IMR-90 (cell line): ENCODE measurements at regions of chrX and their contacts with region 1.

Region 1: DNA sequence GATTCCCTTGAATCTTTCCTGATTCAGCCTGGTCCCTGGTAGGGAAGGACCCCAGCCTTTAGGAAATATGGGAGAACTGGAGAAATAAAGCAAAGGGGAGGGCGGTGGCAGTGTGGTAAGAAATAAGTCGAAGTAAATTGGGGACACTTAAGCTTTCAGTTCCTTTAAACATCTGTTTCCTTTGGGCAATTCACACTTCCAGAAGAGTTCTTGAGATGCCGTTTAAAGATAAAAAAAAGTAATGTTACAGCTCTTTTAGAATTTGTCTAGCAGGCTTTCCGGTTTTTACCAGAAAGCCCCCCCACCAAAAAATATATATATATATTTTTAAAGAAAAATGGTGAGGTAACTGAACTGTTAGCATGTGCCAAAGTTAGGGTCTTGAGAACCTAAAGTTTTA is 46.6 kb downstream of the TSPAN7 start:
- DNase-seq: no peak
- ATAC-seq: no peak
- H3K4me3 ChIP-seq: no peak overlapping the region
- H3K27ac ChIP-seq: no peak overlapping the region
- H3K4me1 ChIP-seq: no peaks in the 10 kb centered on the region
- H3K27me3 ChIP-seq: no peaks in the 10 kb centered on the region
- CTCF ChIP-seq: no peak
- POLR2A ChIP-seq: no peak
- RAD21 ChIP-seq: no peak

Region 2: GRCh38 chrX:38365954-38366353 is 242.0 kb before region 1 on chrX:
- CTCF ChIA-PET with region 1: no interaction called
- POLR2A ChIA-PET with region 1: no interaction called
- dilution Hi-C with region 1: no loop called
- in situ Hi-C with region 1: no loop called
- intact Hi-C with region 1: no loop called
- DNase-seq: no peak
- ATAC-seq: no peak
- H3K4me3 ChIP-seq: no peak overlapping the region
- H3K27ac ChIP-seq: no peak overlapping the region
- H3K4me1 ChIP-seq: no peaks in the 10 kb centered on the region
- H3K27me3 ChIP-seq: peaks cover 2% of the 10 kb centered on the region; the same call in 1 of the 2 replicates
- CTCF ChIP-seq: no peak
- POLR2A ChIP-seq: no peak
- RAD21 ChIP-seq: no peak

Region 3: GRCh38 chrX:38646129-38646528 is 38.2 kb after region 1 on chrX:
- CTCF ChIA-PET with region 1: no interaction called
- POLR2A ChIA-PET with region 1: no interaction called
- dilution Hi-C with region 1: no loop called
- in situ Hi-C with region 1: no loop called
- intact Hi-C with region 1: loop called (anchors 1 kb)
- DNase-seq: no peak
- ATAC-seq: no peak
- H3K4me3 ChIP-seq: no peak overlapping the region
- H3K27ac ChIP-seq: no peak overlapping the region
- H3K4me1 ChIP-seq: no peaks in the 10 kb centered on the region
- H3K27me3 ChIP-seq: peaks cover 1% of the 10 kb centered on the region; the same call in 1 of the 2 replicates
- CTCF ChIP-seq: no peak
- POLR2A ChIP-seq: no peak
- RAD21 ChIP-seq: no peak